Posterior vena cava (tissue), 2 donors: ENCODE measurements at regions of chr3 and their contacts with region 1.

Region 1: DNA sequence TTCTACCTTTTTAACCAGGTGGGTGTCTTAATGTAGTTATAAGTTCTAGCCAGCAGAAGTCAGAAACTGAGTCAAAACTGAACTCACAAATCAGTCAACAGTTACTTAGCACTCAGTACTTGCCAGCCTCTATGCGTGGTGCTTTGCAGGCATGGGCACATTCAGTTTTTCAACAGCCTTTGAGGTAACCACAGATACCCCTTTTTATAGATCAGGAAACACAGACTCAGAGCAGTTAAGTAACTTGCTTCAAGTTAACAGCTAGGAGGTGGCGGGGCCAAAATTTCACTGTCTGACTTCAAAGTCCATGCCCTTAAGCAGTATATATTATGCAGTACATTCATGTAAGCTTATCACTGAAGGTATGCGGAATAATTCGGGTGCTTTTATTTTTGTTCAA is 139.4 kb downstream of the FHIT start:
- DNase-seq: no peak

Region 2: GRCh38 chr3:60948484-60948883 is 163.3 kb before region 1 on chr3:
- intact Hi-C with region 1: no loop called
- DNase-seq: no peak

Region 3: GRCh38 chr3:61043156-61043555 is 68.7 kb before region 1 on chr3:
- intact Hi-C with region 1: loop called in 1 of 2 experiments (anchors 2 kb)
- DNase-seq: no peak

Region 4: GRCh38 chr3:61594144-61594963 is 482.5 kb after region 1 on chr3:
- intact Hi-C with region 1: no loop called
- DNase-seq: no peak